ENCODE measurements at regions of chr1 and their contacts with region 1.

Region 1: DNA sequence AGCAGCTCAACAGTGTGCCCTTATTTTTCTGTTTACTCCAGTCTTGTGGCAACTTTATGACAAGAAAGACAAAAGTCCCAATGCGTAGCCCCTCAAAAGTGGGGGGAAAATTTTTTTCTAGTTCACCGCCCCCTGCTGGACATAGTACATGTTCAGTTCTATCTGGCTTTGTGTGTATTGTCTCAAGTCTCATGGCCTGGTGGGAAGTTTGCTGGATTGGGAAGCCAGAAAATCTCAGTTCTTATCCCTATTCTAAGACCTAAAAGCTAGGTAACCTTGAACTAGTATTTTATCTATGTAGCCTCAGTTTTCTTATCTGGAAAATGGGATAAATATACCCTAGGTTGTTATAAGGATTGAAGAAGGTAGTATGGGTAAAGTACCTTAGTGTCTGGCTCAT is 55.8 kb upstream of the LDLRAP1 start:
- DNase-seq: peak in 6 of 9 donors; percentile 30 to 48 (median 38)
- ATAC-seq: no peak
- H3K4me3 ChIP-seq: no peak overlapping the region
- H3K4me3 Mint-ChIP-seq: no peak overlapping the region
- H3K27ac ChIP-seq: no peak overlapping the region
- H3K27ac Mint-ChIP-seq: peak overlapping the region in 2 of 9 donors; percentile 7 to 65
- H3K4me1 ChIP-seq: no peaks in the 10 kb centered on the region
- H3K4me1 Mint-ChIP-seq: peaks cover 0 to 26% (median 17%) of the 10 kb centered on the region in 7 donors
- H3K27me3 ChIP-seq: no peaks in the 10 kb centered on the region
- H3K27me3 Mint-ChIP-seq: no peaks in the 10 kb centered on the region

Region 2: GRCh38 chr1:25080294-25081209 is 407.1 kb before region 1 on chr1:
- CTCF ChIA-PET with region 1: no interaction called
- POLR2A ChIA-PET with region 1: no interaction called
- intact Hi-C with region 1: no loop called
- DNase-seq: no peak
- ATAC-seq: peak; percentile 64
- H3K4me3 ChIP-seq: no peak overlapping the region
- H3K4me3 Mint-ChIP-seq: no peak overlapping the region
- H3K27ac ChIP-seq: no peak overlapping the region
- H3K27ac Mint-ChIP-seq: peak overlapping the region in 1 of 9 donors; percentile 9
- H3K4me1 ChIP-seq: no peaks in the 10 kb centered on the region
- H3K4me1 Mint-ChIP-seq: peaks cover 0 to 5% (median 0%) of the 10 kb centered on the region in 7 donors
- H3K27me3 ChIP-seq: no peaks in the 10 kb centered on the region
- H3K27me3 Mint-ChIP-seq: peaks cover 0 to 34% (median 0%) of the 10 kb centered on the region in 5 donors

Region 3: GRCh38 chr1:25223471-25223870 is 264.2 kb before region 1 on chr1:
- CTCF ChIA-PET with region 1: no interaction called
- POLR2A ChIA-PET with region 1: no interaction called
- intact Hi-C with region 1: no loop called
- DNase-seq: no peak
- ATAC-seq: no peak
- H3K4me3 ChIP-seq: no peak overlapping the region
- H3K4me3 Mint-ChIP-seq: no peak overlapping the region
- H3K27ac ChIP-seq: no peak overlapping the region
- H3K27ac Mint-ChIP-seq: no peak overlapping the region
- H3K4me1 ChIP-seq: no peaks in the 10 kb centered on the region
- H3K4me1 Mint-ChIP-seq: peaks cover 0 to 11% (median 5%) of the 10 kb centered on the region in 7 donors
- H3K27me3 ChIP-seq: no peaks in the 10 kb centered on the region
- H3K27me3 Mint-ChIP-seq: no peaks in the 10 kb centered on the region

Region 4: DNA sequence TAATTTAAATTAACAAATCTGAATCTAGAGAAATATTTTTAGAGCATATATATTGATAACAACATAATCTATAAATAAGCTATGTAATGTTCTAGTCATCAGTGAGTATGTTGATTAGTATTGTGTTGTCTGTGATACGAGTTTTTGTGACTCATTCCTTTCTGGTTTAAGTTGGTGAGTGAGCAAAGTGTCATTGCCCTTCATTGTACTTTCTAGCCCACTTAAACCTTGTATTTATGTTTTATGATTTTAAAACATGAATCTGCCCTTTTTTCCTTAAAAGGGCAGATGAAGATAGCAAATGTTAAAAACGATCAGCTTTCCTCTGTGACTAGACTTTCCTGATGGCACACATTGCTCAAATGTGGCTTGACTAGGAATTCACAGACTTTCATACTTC is 18.5 kb before region 1 on chr1:
- CTCF ChIA-PET with region 1: interaction called, 3 read pairs
- POLR2A ChIA-PET with region 1: interaction called, 10 read pairs
- intact Hi-C with region 1: loop called in 1 of 2 experiments (anchors 2 kb)
- DNase-seq: no peak
- ATAC-seq: no peak
- H3K4me3 ChIP-seq: no peak overlapping the region
- H3K4me3 Mint-ChIP-seq: no peak overlapping the region
- H3K27ac ChIP-seq: no peak overlapping the region
- H3K27ac Mint-ChIP-seq: peak overlapping the region in 1 of 9 donors; percentile 50
- H3K4me1 ChIP-seq: peaks cover 9 to 43% of the 10 kb centered on the region in 2 donors
- H3K4me1 Mint-ChIP-seq: peaks cover 28 to 78% (median 70%) of the 10 kb centered on the region in 7 donors
- H3K27me3 ChIP-seq: no peaks in the 10 kb centered on the region
- H3K27me3 Mint-ChIP-seq: no peaks in the 10 kb centered on the region

Region 5: DNA sequence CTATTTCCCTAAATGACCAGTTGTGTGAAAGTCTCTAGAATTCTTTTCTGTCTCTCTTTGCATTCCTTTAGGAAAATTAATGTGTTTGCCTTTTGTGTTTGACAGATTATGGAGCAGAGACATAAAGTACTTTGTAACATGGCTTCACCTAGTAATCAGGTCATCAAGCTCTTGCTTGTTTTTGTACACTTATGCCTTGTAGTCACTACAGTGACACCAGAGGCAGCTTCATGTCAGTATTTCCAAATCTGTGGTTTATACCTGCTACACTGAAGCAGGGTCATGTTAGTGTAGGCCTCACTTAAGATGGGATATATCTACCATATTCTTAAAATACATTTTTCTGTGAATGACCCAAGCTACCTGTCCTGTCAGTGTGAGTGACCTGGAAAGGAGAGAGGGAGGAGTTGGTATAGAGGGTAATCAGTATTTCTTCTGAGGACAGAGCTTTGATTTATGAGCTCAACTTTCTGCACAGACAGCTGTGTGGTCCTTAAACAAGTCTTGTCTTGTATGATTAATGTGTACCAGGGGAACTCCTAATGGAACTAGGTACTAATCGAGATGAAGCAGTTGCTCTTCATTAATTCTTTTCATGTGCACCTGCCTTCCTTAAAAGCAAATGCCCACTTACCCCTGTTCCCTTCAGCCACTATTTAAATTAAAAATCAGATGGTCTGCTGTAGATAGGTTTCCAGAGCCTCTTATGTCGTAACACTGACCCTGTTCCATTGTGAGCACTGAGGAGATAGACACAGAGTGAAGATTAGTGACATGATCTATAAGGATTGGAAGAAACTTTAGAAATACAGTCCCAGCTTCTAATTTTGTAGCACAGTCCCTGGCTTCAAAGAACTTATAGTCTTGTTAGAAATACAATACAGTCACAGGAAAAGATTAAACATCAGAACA is 11.2 kb before region 1 on chr1:
- CTCF ChIA-PET with region 1: interaction called, 23 read pairs
- POLR2A ChIA-PET with region 1: interaction called, 10 read pairs
- intact Hi-C with region 1: loop called in 1 of 2 experiments (anchors 2 kb)
- DNase-seq: peak in 4 of 9 donors; percentile 23 to 37 (median 28)
- ATAC-seq: no peak
- H3K4me3 ChIP-seq: no peak overlapping the region
- H3K4me3 Mint-ChIP-seq: peak overlapping the region in 7 of 10 donors; percentile 2 to 64 (median 37)
- H3K27ac ChIP-seq: peak overlapping the region; percentile 48
- H3K27ac Mint-ChIP-seq: peak overlapping the region in 8 of 9 donors; percentile 55 to 97 (median 92)
- H3K4me1 ChIP-seq: peaks cover 9 to 42% of the 10 kb centered on the region in 2 donors
- H3K4me1 Mint-ChIP-seq: peaks cover 31 to 67% (median 59%) of the 10 kb centered on the region in 7 donors
- H3K27me3 ChIP-seq: no peaks in the 10 kb centered on the region
- H3K27me3 Mint-ChIP-seq: no peaks in the 10 kb centered on the region

Region 6: DNA sequence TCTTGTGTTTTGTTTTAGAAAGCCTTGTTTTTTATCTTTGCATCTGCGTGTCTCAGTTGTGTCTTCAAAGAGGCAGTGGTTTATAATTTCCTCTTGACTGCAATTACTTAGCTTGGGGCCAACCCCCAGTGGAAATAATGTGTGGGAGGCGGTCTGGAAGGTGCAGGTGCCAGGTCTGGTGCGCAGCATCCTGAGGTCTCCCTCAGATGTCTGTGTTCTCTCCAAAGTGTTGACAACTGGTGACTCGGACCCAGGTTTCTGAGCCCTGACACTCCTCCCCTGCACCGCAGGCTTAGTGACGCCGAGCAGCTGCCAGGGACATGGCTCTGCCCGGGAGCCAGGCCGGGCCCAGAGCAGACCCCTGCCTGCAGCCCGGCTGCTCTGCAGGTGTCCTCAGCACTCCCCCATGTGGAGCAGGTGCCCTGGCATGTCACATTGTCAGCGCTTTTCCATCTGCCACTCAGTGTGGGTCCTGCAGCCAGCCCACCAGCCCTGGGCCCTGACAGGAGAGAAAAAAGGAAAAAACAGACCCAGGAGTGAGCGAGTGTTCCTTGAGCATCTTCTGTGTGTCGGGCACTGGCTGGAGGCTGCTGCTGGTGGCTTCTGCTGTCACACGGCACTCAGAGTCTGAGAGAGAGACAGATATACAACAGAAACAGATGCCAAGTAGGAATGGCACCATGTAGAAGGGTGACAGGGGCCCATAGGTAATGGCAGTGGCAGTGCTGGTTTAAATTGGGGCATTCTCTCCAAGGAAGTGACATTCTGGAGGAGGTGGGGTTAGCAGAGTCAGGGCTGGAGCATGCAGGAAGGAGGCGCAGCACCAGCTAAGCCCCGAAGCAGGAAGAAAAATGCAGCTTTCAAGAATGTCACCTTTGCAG is 287.5 kb after region 1 on chr1:
- CTCF ChIA-PET with region 1: no interaction called
- POLR2A ChIA-PET with region 1: no interaction called
- intact Hi-C with region 1: no loop called
- DNase-seq: peak; percentile 53 to 97 (median 95)
- ATAC-seq: peak; percentile 92
- H3K4me3 ChIP-seq: peak overlapping the region; percentile 49
- H3K4me3 Mint-ChIP-seq: peak overlapping the region; percentile 71 to 91 (median 84)
- H3K27ac ChIP-seq: peak overlapping the region; percentile 77
- H3K27ac Mint-ChIP-seq: peak overlapping the region; percentile 79 to 99 (median 97)
- H3K4me1 ChIP-seq: peaks cover 35 to 78% of the 10 kb centered on the region in 2 donors
- H3K4me1 Mint-ChIP-seq: peaks cover 52 to 96% (median 86%) of the 10 kb centered on the region in 7 donors
- H3K27me3 ChIP-seq: no peaks in the 10 kb centered on the region
- H3K27me3 Mint-ChIP-seq: peaks cover 0 to 45% (median 0%) of the 10 kb centered on the region in 5 donors

Measured in naive thymus-derived CD4-positive, alpha-beta T cell (primary cell).